Psoas muscle (tissue), 8 donors: ENCODE measurements at regions of chr11 and their contacts with region 1.

Region 1: DNA sequence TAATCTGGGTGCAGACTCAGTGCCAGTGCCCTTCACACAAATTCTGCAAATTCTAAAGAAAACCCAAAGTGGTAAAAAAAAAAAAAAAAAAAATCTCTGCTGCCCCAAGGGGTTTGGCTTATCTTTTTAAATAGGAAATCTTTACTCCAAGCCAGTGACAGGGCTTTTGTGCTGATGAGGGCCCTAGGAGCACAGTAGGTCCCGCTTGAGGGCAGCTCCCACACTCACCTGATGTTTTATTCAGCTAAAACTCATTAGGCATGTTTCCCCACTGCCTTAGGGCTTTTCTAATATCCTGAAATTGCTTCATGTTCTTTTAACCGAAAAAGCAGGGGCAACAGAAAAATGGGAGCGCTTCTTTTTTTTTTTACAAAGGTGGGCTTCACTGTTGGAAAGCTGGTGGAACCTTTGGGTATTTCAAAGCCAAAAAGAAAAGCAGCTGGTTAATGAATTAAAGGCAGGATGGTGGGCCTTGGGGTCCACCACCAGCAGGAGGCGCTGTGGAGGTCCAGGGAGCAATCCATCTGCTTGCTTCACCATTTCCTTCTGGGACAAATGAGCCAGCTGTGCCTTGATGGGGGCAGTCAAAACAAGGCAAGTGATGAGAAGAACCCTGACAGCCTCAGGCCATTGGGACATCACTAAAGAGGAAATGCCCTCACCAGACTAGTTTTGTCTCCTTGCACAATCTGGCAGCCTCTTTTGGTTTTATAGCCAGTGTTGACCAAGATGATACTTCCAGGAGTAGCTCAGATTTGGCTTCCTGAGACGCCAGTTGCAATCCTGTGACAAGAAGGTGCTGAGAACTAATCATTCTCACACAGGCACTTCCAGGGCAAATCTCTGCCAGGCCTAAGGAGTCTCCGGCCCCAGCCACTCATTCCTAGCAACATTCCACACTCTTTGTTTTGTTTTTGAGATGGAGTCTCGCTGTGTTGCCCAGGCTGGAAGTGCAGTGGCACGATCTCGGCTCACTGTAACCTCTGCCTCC is 38.4 kb upstream of the WEE1 start:
- DNase-seq: peak; percentile 83 to 89
- ATAC-seq: peak; percentile 77 to 90 (median 88)
- H3K4me3 ChIP-seq: no peak overlapping the region
- H3K27ac ChIP-seq: peak overlapping the region; percentile 23
- H3K4me1 ChIP-seq: no peaks in the 10 kb centered on the region
- H3K27me3 ChIP-seq: no peaks in the 10 kb centered on the region
- CTCF ChIP-seq: peak; percentile 70

Region 2: DNA sequence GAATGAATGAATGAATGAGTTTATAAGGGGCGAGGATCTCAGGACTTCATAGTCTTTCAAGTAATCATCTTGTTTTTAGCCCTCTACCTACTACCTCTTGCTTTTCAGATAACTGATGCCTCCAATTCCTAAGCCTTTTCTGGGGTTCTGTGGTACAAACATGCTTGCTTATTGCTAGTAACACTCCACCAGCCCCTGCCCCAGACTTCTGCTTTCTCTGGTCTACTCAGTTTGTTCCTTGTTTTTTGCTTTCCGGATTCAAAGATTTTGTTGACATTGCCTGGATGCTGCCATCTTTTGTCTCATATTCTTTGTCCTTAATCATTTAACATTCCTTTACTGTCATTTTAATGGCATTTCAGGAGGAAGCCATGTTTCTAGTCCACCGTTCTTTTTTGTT is 562.0 kb before region 1 on chr11:
- intact Hi-C with region 1: no loop called
- DNase-seq: no peak
- ATAC-seq: no peak
- H3K4me3 ChIP-seq: no peak overlapping the region
- H3K27ac ChIP-seq: no peak overlapping the region
- H3K4me1 ChIP-seq: no peaks in the 10 kb centered on the region
- H3K27me3 ChIP-seq: no peaks in the 10 kb centered on the region
- CTCF ChIP-seq: no peak

Region 3: GRCh38 chr11:9231848-9232177 is 303.3 kb before region 1 on chr11:
- intact Hi-C with region 1: no loop called
- DNase-seq: no peak
- ATAC-seq: peak in 2 of 4 donors; percentile 37 to 60
- H3K4me3 ChIP-seq: peak overlapping the region; percentile 11
- H3K27ac ChIP-seq: peak overlapping the region; percentile 19
- H3K4me1 ChIP-seq: peaks cover 25% of the 10 kb centered on the region
- H3K27me3 ChIP-seq: no peaks in the 10 kb centered on the region
- CTCF ChIP-seq: no peak

Region 4: DNA sequence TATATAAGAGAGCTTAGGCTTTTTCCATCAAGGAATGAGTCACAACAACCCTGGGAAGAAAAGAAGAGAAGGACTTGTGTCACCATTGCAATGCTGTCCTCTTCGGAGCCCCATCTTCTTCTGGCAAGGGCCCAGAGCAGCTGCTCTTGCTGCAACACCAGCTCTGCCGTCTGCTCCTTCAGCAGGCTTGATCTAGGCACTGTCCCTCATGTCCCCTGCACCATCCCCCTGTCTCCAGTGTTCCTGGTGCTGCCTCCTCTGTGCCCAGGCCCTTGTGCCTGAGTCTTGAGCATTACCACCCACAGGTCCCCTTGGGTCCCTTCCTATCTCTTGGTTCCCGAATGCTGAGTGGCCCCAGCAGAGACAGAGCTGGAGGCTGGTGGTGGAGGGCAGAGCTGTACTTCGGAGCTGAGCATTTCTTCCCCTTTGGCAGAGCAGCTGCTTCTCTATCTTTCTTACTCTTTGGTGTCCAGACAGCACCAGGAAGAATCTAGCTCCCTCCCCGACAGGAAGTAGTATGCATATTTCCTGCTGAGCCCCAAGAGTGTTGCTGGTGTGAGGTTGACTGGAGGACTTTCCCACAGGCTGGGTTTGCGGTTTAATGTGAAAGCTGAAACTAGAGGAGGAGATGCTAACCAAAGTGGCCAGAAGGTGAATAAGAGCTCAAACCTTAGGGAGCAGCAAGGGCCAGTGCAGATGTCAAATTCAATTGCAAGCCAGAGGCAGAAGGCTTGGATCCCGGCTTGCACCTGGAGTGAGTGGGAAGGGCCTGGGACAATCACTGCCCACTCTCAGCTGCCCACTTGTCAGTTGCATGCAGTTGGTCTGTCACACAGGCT is 66.2 kb after region 1 on chr11:
- intact Hi-C with region 1: no loop called
- DNase-seq: peak; percentile 44 to 74
- ATAC-seq: peak in 2 of 4 donors; percentile 35 to 50
- H3K4me3 ChIP-seq: no peak overlapping the region
- H3K27ac ChIP-seq: no peak overlapping the region
- H3K4me1 ChIP-seq: no peaks in the 10 kb centered on the region
- H3K27me3 ChIP-seq: no peaks in the 10 kb centered on the region
- CTCF ChIP-seq: no peak

Region 5: GRCh38 chr11:9748361-9748970 is 213.4 kb after region 1 on chr11:
- intact Hi-C with region 1: loop called in 1 of 2 experiments (anchors 10 kb)
- DNase-seq: no peak
- ATAC-seq: peak; percentile 62 to 81 (median 78)
- H3K4me3 ChIP-seq: no peak overlapping the region
- H3K27ac ChIP-seq: peak overlapping the region; percentile 21
- H3K4me1 ChIP-seq: no peaks in the 10 kb centered on the region
- H3K27me3 ChIP-seq: no peaks in the 10 kb centered on the region
- CTCF ChIP-seq: peak; percentile 45